ENCODE measurements at regions of chr3 and their contacts with region 1.

Region 1: GRCh38 chr3:158896729-158897128 is 94.9 kb downstream of the MFSD1 start:
- DNase-seq: no peak
- H3K4me3 Mint-ChIP-seq: no peak overlapping the region
- H3K27ac Mint-ChIP-seq: no peak overlapping the region
- H3K4me1 Mint-ChIP-seq: no peaks in the 10 kb centered on the region
- H3K27me3 Mint-ChIP-seq: peaks cover 2% of the 10 kb centered on the region

Region 2: GRCh38 chr3:158935846-158936245 is 39.1 kb after region 1 on chr3:
- intact Hi-C with region 1: no loop called
- DNase-seq: no peak
- H3K4me3 Mint-ChIP-seq: no peak overlapping the region
- H3K27ac Mint-ChIP-seq: no peak overlapping the region
- H3K4me1 Mint-ChIP-seq: no peaks in the 10 kb centered on the region
- H3K27me3 Mint-ChIP-seq: peaks cover 4% of the 10 kb centered on the region

Region 3: GRCh38 chr3:158950178-158950901 is 53.6 kb after region 1 on chr3:
- intact Hi-C with region 1: loop called (anchors 2 kb)
- DNase-seq: no peak
- H3K4me3 Mint-ChIP-seq: no peak overlapping the region
- H3K27ac Mint-ChIP-seq: no peak overlapping the region
- H3K4me1 Mint-ChIP-seq: no peaks in the 10 kb centered on the region
- H3K27me3 Mint-ChIP-seq: no peaks in the 10 kb centered on the region